Sigmoid colon (tissue), 7 donors: ENCODE measurements at regions of chr17 and their contacts with region 1.

Region 1: GRCh38 chr17:15260376-15261257 is 4.5 kb downstream of the PMP22 start:
- DNase-seq: peak; percentile 97
- H3K4me3 ChIP-seq: peak overlapping the region; percentile 61 to 94 (median 80)
- H3K27ac ChIP-seq: peak overlapping the region; percentile 89 to 99 (median 94)
- H3K4me1 ChIP-seq: peaks cover 0 to 69% (median 57%) of the 10 kb centered on the region in 4 donors
- H3K27me3 ChIP-seq: no peaks in the 10 kb centered on the region
- CTCF ChIP-seq: peak in 3 of 4 experiments; percentile 23 to 79 (median 29)
- EP300 ChIP-seq: peak in 1 of 4 donors; percentile 22
- POLR2A ChIP-seq: no peak

Region 2: DNA sequence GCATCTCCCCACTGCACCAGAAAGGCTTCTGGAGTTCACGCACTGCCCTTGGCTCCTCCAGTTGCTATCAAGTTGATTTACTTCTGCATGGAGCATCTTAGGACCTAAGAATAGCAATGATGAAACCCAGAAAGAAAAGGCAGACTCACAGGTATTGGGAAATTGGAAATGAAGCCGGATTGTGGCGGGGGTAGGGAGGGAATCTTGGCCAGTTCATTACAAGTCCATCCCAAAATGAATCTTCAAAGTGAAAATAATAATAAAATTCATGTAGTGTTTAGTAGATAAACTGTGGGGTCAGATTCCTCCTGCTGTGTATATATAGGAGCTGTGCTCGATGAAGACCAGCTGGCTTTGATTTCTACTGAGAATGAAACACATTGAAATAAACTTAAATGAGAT is 47.1 kb after region 1 on chr17:
- intact Hi-C with region 1: loop called (anchors 1 kb)
- DNase-seq: peak; percentile 90
- H3K4me3 ChIP-seq: no peak overlapping the region
- H3K27ac ChIP-seq: peak overlapping the region in 3 of 4 donors; percentile 68 to 78 (median 73)
- H3K4me1 ChIP-seq: peaks cover 3 to 63% (median 55%) of the 10 kb centered on the region in 4 donors
- H3K27me3 ChIP-seq: no peaks in the 10 kb centered on the region
- CTCF ChIP-seq: no peak
- EP300 ChIP-seq: peak; percentile 87 to 95 (median 90)
- POLR2A ChIP-seq: no peak

Region 3: DNA sequence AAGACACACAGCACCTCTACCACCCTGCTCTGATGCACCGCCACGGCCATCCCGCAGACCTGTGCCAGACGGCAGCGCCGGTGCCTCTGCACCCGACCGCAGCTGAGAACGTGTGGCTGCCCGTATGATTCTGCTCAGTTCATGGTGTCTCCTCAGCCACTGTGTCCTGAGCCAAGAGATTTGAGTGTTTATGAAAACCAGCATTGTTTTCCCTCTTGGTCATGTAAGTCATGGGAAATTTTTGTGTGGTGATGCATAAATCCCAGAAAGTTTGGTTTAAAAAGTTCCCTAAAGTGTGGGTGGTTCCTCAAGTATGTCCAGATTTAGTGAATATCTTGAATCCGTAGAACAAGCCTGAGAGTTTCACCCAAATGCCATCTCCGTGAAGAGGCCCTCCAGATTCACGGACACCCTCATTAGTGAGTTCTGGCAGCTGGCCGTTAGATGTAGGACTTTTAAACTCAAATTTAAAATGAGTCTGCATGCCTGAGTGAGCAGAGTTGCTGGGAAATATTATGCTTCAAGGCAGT is 149.2 kb after region 1 on chr17:
- intact Hi-C with region 1: loop called (anchors 5 kb)
- DNase-seq: peak; percentile 83
- H3K4me3 ChIP-seq: peak overlapping the region in 3 of 4 donors; percentile 10 to 28 (median 12)
- H3K27ac ChIP-seq: peak overlapping the region; percentile 80 to 84 (median 81)
- H3K4me1 ChIP-seq: peaks cover 0 to 44% (median 35%) of the 10 kb centered on the region in 4 donors
- H3K27me3 ChIP-seq: no peaks in the 10 kb centered on the region
- CTCF ChIP-seq: no peak
- EP300 ChIP-seq: peak in 3 of 4 donors; percentile 53 to 85 (median 80)
- POLR2A ChIP-seq: no peak

Region 4: GRCh38 chr17:15456972-15457722 is 196.5 kb after region 1 on chr17:
- intact Hi-C with region 1: loop called (anchors 1 kb)
- DNase-seq: peak; percentile 95
- H3K4me3 ChIP-seq: no peak overlapping the region
- H3K27ac ChIP-seq: peak overlapping the region; percentile 78 to 85 (median 82)
- H3K4me1 ChIP-seq: peaks cover 0 to 50% (median 47%) of the 10 kb centered on the region in 4 donors
- H3K27me3 ChIP-seq: no peaks in the 10 kb centered on the region
- CTCF ChIP-seq: peak; percentile 39 to 56 (median 50)
- EP300 ChIP-seq: peak in 3 of 4 donors; percentile 27 to 66 (median 52)
- POLR2A ChIP-seq: no peak

Region 5: DNA sequence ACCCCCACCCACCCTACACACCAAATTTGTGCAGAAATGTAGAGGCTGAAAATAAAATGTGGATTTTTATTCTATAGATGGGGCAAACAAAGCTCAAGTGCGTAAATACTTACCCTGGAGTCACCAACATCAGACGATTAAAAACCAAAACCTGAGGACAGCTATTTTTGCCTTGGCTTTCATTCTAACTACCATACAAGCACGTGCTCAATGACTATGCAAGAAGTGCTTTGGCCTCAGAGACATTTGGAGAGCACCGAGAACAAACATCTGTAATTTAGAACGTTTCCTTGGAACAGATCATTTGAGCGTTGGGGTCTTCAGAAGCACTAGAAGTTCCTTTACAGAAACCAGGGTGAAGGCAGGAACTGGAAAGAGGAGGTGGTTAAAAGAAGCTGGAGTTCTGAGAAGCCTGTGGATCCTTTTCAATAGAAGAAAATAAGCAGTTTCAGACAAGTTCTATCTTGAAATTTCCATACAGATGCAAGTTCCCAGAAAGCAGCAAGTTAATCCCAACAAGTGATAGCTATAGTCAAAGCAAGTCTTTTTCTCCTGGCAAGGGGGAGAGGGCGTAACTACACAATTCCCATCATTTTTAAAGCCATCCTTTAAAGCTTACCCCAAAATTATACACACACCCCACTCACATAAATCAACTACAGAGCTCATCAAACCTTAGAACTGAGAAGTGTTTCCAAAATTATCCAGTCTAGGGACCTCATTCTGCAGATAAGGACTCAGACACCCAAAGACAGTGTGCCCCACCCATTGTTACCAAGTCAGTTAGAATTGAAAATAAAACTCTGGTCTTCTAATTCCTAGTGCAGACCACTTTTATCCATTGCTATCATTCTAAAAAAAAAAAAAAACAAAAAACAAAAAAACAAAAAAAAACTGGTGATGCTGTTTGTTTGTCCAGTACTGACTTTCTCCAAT is 236.4 kb after region 1 on chr17:
- intact Hi-C with region 1: no loop called
- DNase-seq: no peak
- H3K4me3 ChIP-seq: no peak overlapping the region
- H3K27ac ChIP-seq: peak overlapping the region in 2 of 4 donors; percentile 1 to 49
- H3K4me1 ChIP-seq: peaks cover 0 to 6% (median 3%) of the 10 kb centered on the region in 4 donors
- H3K27me3 ChIP-seq: no peaks in the 10 kb centered on the region
- CTCF ChIP-seq: no peak
- EP300 ChIP-seq: no peak
- POLR2A ChIP-seq: no peak

Region 6: DNA sequence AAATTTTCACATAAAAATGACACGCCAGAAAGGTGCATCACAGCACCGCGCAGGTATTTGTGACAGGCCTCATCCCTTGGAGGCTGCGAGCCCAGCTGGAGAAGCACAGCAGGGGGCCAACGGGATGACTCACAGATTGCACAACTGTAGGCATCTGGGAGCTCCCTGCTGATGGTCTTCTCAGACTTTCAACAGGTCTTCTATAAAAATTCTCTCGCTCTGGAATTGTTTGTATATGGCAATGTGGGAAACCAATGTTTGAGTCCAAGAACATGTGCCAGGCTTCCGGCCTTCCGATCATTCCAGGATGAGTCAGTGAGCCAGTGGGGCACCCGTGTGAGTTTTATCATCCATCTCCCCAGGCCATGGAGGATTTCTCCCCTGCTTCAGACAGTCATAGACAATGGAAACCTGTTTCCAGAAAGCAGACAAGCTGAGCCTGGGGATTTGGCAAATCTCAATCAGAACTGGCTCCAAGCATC is 660.2 kb after region 1 on chr17:
- intact Hi-C with region 1: loop called (anchors 10 kb)
- DNase-seq: peak; percentile 92
- H3K4me3 ChIP-seq: no peak overlapping the region
- H3K27ac ChIP-seq: peak overlapping the region in 3 of 4 donors; percentile 66 to 80 (median 77)
- H3K4me1 ChIP-seq: peaks cover 0 to 55% (median 51%) of the 10 kb centered on the region in 4 donors
- H3K27me3 ChIP-seq: peaks cover 0 to 10% (median 0%) of the 10 kb centered on the region in 3 donors
- CTCF ChIP-seq: no peak
- EP300 ChIP-seq: peak; percentile 41 to 90 (median 72)
- POLR2A ChIP-seq: no peak